Caco-2 (cell line): ENCODE measurements at regions of chr2 and their contacts with region 1.

Region 1: DNA sequence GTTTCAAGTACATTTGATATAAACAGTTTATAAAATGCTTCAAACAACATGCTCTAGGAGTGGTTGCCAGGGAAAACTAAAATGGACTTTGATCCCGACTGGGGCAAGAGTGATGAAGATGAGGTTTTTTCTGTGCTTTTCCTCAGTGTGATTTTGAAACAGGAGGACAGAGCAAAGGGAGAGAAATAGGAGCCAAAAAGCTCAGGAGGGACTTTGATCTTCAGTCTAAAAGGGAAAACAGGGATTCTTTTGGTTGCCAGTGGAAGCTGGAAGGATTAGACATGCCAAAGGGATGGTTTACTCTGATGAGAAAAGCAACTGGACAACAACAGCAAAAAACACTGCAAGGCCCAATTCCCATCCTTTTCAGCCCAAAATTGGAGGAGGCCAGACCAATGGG is 95.5 kb downstream of the LTBP1 start:
- DNase-seq: no peak
- H3K4me3 ChIP-seq: no peak overlapping the region
- H3K4me3 Mint-ChIP-seq: no peak overlapping the region
- H3K27ac Mint-ChIP-seq: no peak overlapping the region
- H3K4me1 ChIP-seq: no peaks in the 10 kb centered on the region
- H3K4me1 Mint-ChIP-seq: peaks cover 11% of the 10 kb centered on the region
- H3K27me3 ChIP-seq: no peaks in the 10 kb centered on the region
- H3K27me3 Mint-ChIP-seq: no peaks in the 10 kb centered on the region
- CTCF ChIP-seq: no peak

Region 2: DNA sequence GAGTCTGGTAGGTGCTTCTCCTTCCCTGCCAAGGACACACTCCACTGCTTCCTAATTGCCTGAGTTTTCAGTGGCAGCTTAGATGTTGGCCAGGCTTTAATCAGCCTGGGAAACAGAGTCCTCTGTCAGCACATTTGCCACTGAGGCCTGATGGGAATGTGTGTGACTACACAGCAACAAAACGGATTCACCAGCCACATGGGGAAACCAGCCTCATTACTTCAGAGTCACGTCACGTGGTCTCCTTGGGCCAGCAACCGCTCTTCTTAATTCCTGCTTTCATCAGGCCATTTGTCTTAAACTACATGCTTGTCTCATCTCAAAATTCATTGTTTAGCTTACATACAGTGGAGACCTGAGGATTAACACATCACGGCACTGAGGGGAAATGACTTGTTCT is 189.4 kb before region 1 on chr2:
- CTCF ChIA-PET with region 1: no interaction called
- POLR2A ChIA-PET with region 1: no interaction called
- intact Hi-C with region 1: no loop called
- DNase-seq: no peak
- H3K4me3 ChIP-seq: no peak overlapping the region
- H3K4me3 Mint-ChIP-seq: no peak overlapping the region
- H3K27ac Mint-ChIP-seq: no peak overlapping the region
- H3K4me1 ChIP-seq: no peaks in the 10 kb centered on the region
- H3K4me1 Mint-ChIP-seq: no peaks in the 10 kb centered on the region
- H3K27me3 ChIP-seq: no peaks in the 10 kb centered on the region
- H3K27me3 Mint-ChIP-seq: no peaks in the 10 kb centered on the region
- CTCF ChIP-seq: no peak

Region 3: DNA sequence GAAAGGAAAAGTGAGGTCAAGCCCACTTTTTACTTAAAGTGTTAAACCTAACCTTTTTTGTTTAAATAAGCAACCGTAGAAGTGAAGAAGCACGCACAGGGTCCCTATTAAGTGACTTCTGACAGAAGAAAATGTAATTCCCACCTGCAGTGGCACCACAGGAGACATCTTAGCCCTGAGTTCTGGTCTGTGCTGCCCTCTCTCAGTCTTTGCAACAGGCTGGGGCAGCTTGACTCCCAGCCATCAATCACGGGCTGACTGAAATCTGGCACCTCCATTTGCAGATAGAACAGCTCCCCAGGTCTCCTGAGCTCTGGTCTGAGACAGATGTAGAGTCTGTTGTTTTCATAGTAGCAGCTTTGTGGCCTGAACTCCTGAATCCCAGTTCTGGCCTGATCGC is 74.5 kb after region 1 on chr2:
- CTCF ChIA-PET with region 1: no interaction called
- POLR2A ChIA-PET with region 1: no interaction called
- intact Hi-C with region 1: loop called (anchors 5 kb)
- DNase-seq: no peak
- H3K4me3 ChIP-seq: no peak overlapping the region
- H3K4me3 Mint-ChIP-seq: no peak overlapping the region
- H3K27ac Mint-ChIP-seq: no peak overlapping the region
- H3K4me1 ChIP-seq: peaks cover 8% of the 10 kb centered on the region
- H3K4me1 Mint-ChIP-seq: peaks cover 7% of the 10 kb centered on the region
- H3K27me3 ChIP-seq: no peaks in the 10 kb centered on the region
- H3K27me3 Mint-ChIP-seq: no peaks in the 10 kb centered on the region
- CTCF ChIP-seq: no peak

Region 4: DNA sequence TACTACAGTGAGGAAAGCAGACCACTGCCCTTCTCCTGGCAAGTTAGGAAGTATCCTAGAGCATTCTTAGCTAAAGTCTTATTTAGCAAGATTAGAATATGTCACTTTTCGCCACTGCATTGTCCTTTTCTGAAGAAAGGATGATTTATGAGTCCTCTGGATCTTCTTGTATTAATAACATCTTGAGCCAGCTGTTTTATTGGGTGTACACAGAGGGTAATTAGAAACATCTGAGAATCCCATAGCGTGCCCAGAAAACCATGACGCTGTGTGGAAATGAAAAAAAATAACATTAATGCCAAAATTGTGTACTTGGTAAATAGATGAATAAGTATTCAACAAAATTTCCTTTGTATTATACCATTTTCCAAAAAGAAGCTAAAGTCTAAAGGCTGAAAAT is 103.2 kb after region 1 on chr2:
- CTCF ChIA-PET with region 1: no interaction called
- POLR2A ChIA-PET with region 1: no interaction called
- intact Hi-C with region 1: no loop called
- DNase-seq: no peak
- H3K4me3 ChIP-seq: no peak overlapping the region
- H3K4me3 Mint-ChIP-seq: no peak overlapping the region
- H3K27ac Mint-ChIP-seq: no peak overlapping the region
- H3K4me1 ChIP-seq: no peaks in the 10 kb centered on the region
- H3K4me1 Mint-ChIP-seq: no peaks in the 10 kb centered on the region
- H3K27me3 ChIP-seq: no peaks in the 10 kb centered on the region
- H3K27me3 Mint-ChIP-seq: no peaks in the 10 kb centered on the region
- CTCF ChIP-seq: no peak